HepG2 (cell line): ENCODE measurements at regions of chr2 and their contacts with region 1.

Region 1: GRCh38 chr2:8574144-8575037 is 107.5 kb upstream of the ID2 start:
- DNase-seq: peak; percentile 90
- ATAC-seq: peak; percentile 81
- H3K4me3 ChIP-seq: peak overlapping the region; percentile 51 to 71 (median 55)
- H3K27ac ChIP-seq: peak overlapping the region; percentile 82
- H3K4me1 ChIP-seq: peaks cover 75% of the 10 kb centered on the region
- H3K27me3 ChIP-seq: no peaks in the 10 kb centered on the region; a peak in 2 of 5 replicates
- CTCF ChIP-seq: peak; percentile 25
- EP300 ChIP-seq: peak; percentile 69 to 85; a peak in 3 of 4 replicates
- POLR2A ChIP-seq: peak in 1 of 2 experiments; percentile 54; a peak in 3 of 4 replicates
- RAD21 ChIP-seq: peak; percentile 40

Region 2: GRCh38 chr2:8525582-8526402 is 48.6 kb before region 1 on chr2:
- CTCF ChIA-PET with region 1: no interaction called
- POLR2A ChIA-PET with region 1: interaction called, 11 read pairs
- in situ Hi-C with region 1: no loop called
- intact Hi-C with region 1: loop called (anchors 1 kb)
- DNase-seq: peak; percentile 92
- ATAC-seq: peak; percentile 96
- H3K4me3 ChIP-seq: peak overlapping the region; percentile 26 to 64 (median 42)
- H3K27ac ChIP-seq: no peak overlapping the region
- H3K4me1 ChIP-seq: peaks cover 38% of the 10 kb centered on the region
- H3K27me3 ChIP-seq: peaks cover 5 to 33% of the 10 kb centered on the region in 2 experiments; a peak in 4 of 5 replicates
- CTCF ChIP-seq: peak; percentile 97
- EP300 ChIP-seq: peak; percentile 11 to 67; a peak in 2 of 4 replicates
- POLR2A ChIP-seq: no peak
- RAD21 ChIP-seq: peak; percentile 99

Region 3: GRCh38 chr2:8598295-8599165 is 24.1 kb after region 1 on chr2:
- CTCF ChIA-PET with region 1: no interaction called
- POLR2A ChIA-PET with region 1: interaction called, 12 read pairs
- in situ Hi-C with region 1: no loop called
- intact Hi-C with region 1: no loop called
- DNase-seq: peak; percentile 65
- ATAC-seq: peak; percentile 41
- H3K4me3 ChIP-seq: no peak overlapping the region
- H3K27ac ChIP-seq: no peak overlapping the region
- H3K4me1 ChIP-seq: peaks cover 51% of the 10 kb centered on the region
- H3K27me3 ChIP-seq: no peaks in the 10 kb centered on the region
- CTCF ChIP-seq: 0 out of 2 replicates have a peak, but pooled peaks have one; percentile 12
- EP300 ChIP-seq: no peak; a peak in 1 of 4 replicates
- POLR2A ChIP-seq: no peak
- RAD21 ChIP-seq: no peak

Region 4: GRCh38 chr2:8622199-8622952 is 48.0 kb after region 1 on chr2:
- CTCF ChIA-PET with region 1: no interaction called
- POLR2A ChIA-PET with region 1: interaction called, 70 read pairs
- in situ Hi-C with region 1: no loop called
- intact Hi-C with region 1: loop called (anchors 1 kb)
- DNase-seq: no peak
- ATAC-seq: no peak
- H3K4me3 ChIP-seq: peak overlapping the region in 1 of 3 experiments; percentile 39; a peak in 1 of 6 replicates
- H3K27ac ChIP-seq: peak overlapping the region; percentile 30
- H3K4me1 ChIP-seq: peaks cover 76% of the 10 kb centered on the region
- H3K27me3 ChIP-seq: no peaks in the 10 kb centered on the region; a peak in 1 of 5 replicates
- CTCF ChIP-seq: no peak
- EP300 ChIP-seq: peak in 1 of 2 experiments; percentile 43; a peak in 1 of 4 replicates
- POLR2A ChIP-seq: no peak
- RAD21 ChIP-seq: no peak

Region 5: DNA sequence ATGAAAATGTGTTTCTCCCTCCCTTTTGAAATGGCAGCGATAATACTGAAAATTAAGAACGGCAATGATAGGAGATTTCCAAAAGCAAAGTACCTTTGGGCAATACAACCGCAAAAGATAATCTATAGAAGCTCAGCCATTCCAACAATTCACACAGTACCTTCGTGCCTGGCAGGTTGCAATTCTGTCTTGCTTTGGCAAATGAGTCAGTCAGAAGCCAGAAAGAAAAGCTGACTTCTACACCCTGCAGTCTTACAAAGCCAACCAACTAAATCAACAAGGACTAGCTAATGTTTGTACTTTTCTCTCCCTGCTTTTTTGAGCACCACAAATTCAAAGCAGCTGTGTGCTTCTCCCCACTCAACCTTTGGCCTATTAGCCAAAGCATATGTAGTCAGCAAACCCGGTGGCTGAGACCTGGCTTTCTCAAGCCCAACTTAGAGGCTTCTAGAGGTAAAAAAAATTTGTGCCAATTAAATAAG is 81.8 kb after region 1 on chr2:
- CTCF ChIA-PET with region 1: no interaction called
- POLR2A ChIA-PET with region 1: interaction called, 10 read pairs
- in situ Hi-C with region 1: no loop called
- intact Hi-C with region 1: loop called (anchors 1 kb)
- DNase-seq: peak; percentile 94
- ATAC-seq: peak; percentile 75
- H3K4me3 ChIP-seq: peak overlapping the region in 2 of 3 experiments; percentile 3 to 6; a peak in 1 of 6 replicates
- H3K27ac ChIP-seq: peak overlapping the region; percentile 62
- H3K4me1 ChIP-seq: peaks cover 81% of the 10 kb centered on the region
- H3K27me3 ChIP-seq: no peaks in the 10 kb centered on the region
- CTCF ChIP-seq: peak; percentile 28
- EP300 ChIP-seq: peak in 1 of 2 experiments; percentile 84; a peak in 2 of 4 replicates
- POLR2A ChIP-seq: 0 out of 4 replicates have a peak, but pooled peaks of 1 of the 2 experiments have one; percentile 14
- RAD21 ChIP-seq: peak; percentile 31; the same call in 1 of the 2 replicates